WTC11 (cell line): ENCODE measurements at regions of chr2 and their contacts with region 1.

Region 1: DNA sequence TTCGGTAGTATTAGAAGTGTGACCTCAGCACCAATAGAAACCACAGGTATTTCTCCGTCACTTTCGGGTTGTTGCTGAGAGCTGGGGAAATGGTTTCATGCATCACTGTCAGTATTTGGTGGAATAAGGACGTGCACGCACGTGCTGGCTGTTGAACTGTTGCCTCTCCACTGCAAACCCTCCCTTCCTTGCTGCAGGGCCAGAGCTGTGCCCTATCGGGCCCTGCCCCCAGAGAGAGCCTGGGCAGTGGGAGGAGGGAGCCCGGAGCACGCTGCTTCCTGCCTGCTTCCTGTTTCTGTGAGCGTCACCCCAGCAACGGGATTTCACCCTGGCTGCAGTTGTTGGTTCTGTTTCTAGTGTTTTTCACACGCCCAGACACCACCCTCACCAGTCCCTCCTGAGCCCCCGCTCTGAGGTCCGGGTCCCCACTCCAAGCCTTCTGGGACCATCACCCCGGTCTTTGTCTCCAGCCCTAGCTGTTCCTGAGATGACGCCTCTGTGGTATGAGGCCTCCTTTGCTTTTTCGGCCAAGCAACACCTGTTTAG is 47.4 kb downstream of the LRRFIP1 start:
- DNase-seq: peak; percentile 70
- ATAC-seq: peak; percentile 91
- H3K4me3 Mint-ChIP-seq: no peak overlapping the region; the same call in 1 of the 2 replicates
- H3K27ac Mint-ChIP-seq: peak overlapping the region; percentile 85
- H3K4me1 Mint-ChIP-seq: peaks cover 50% of the 10 kb centered on the region
- H3K27me3 Mint-ChIP-seq: no peaks in the 10 kb centered on the region
- CTCF ChIP-seq: no peak

Region 2: GRCh38 chr2:237315170-237315828 is 359.5 kb before region 1 on chr2:
- CTCF ChIA-PET with region 1: no interaction called
- POLR2A ChIA-PET with region 1: no interaction called
- DNase-seq: no peak
- ATAC-seq: peak; percentile 51
- H3K4me3 Mint-ChIP-seq: no peak overlapping the region
- H3K27ac Mint-ChIP-seq: no peak overlapping the region
- H3K4me1 Mint-ChIP-seq: peaks cover 3% of the 10 kb centered on the region; the same call in 1 of the 2 replicates
- H3K27me3 Mint-ChIP-seq: no peaks in the 10 kb centered on the region
- CTCF ChIP-seq: no peak

Region 3: GRCh38 chr2:237662671-237663093 is 12.1 kb before region 1 on chr2:
- CTCF ChIA-PET with region 1: interaction called, 15 read pairs
- POLR2A ChIA-PET with region 1: no interaction called
- DNase-seq: peak; percentile 93
- ATAC-seq: peak; percentile 92
- H3K4me3 Mint-ChIP-seq: peak overlapping the region; percentile 23; the same call in 1 of the 2 replicates
- H3K27ac Mint-ChIP-seq: peak overlapping the region; percentile 58
- H3K4me1 Mint-ChIP-seq: peaks cover 57% of the 10 kb centered on the region
- H3K27me3 Mint-ChIP-seq: no peaks in the 10 kb centered on the region
- CTCF ChIP-seq: no peak

Region 4: DNA sequence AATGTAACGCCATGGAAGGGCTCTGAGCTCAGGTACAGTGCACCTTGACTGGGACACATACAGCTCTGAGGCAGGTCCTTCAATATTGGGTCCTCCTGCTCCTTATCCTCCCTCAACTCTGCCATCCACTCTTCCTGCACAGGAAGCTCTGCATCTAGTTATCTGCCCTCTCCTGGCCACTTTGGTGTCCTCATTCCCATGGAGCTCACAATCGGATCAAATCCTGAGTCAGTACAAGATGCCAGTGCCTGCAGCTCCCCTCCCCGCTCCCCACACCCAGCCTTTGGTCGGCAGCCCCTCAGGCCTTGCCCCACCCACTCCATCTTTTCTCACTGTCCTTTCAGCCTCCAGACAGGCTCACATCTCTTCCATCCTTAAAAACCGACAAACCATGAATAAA is 10.6 kb after region 1 on chr2:
- CTCF ChIA-PET with region 1: interaction called, 63 read pairs
- POLR2A ChIA-PET with region 1: interaction called, 3 read pairs
- DNase-seq: no peak
- ATAC-seq: peak; percentile 91
- H3K4me3 Mint-ChIP-seq: no peak overlapping the region
- H3K27ac Mint-ChIP-seq: peak overlapping the region; percentile 11; the same call in 1 of the 2 replicates
- H3K4me1 Mint-ChIP-seq: peaks cover 11% of the 10 kb centered on the region
- H3K27me3 Mint-ChIP-seq: no peaks in the 10 kb centered on the region
- CTCF ChIP-seq: no peak

Region 5: GRCh38 chr2:237691908-237692600 is 17.2 kb after region 1 on chr2:
- CTCF ChIA-PET with region 1: interaction called, 63 read pairs
- POLR2A ChIA-PET with region 1: no interaction called
- DNase-seq: peak; percentile 97
- ATAC-seq: peak; percentile 82
- H3K4me3 Mint-ChIP-seq: peak overlapping the region; percentile 75
- H3K27ac Mint-ChIP-seq: no peak overlapping the region
- H3K4me1 Mint-ChIP-seq: peaks cover 54% of the 10 kb centered on the region
- H3K27me3 Mint-ChIP-seq: no peaks in the 10 kb centered on the region
- CTCF ChIP-seq: no peak

Region 6: GRCh38 chr2:237744613-237745249 is 69.9 kb after region 1 on chr2:
- CTCF ChIA-PET with region 1: interaction called, 48 read pairs
- POLR2A ChIA-PET with region 1: no interaction called
- DNase-seq: peak; percentile 86
- ATAC-seq: peak; percentile 82
- H3K4me3 Mint-ChIP-seq: no peak overlapping the region
- H3K27ac Mint-ChIP-seq: peak overlapping the region; percentile 80
- H3K4me1 Mint-ChIP-seq: peaks cover 43% of the 10 kb centered on the region
- H3K27me3 Mint-ChIP-seq: no peaks in the 10 kb centered on the region
- CTCF ChIP-seq: peak; percentile 80

Region 7: DNA sequence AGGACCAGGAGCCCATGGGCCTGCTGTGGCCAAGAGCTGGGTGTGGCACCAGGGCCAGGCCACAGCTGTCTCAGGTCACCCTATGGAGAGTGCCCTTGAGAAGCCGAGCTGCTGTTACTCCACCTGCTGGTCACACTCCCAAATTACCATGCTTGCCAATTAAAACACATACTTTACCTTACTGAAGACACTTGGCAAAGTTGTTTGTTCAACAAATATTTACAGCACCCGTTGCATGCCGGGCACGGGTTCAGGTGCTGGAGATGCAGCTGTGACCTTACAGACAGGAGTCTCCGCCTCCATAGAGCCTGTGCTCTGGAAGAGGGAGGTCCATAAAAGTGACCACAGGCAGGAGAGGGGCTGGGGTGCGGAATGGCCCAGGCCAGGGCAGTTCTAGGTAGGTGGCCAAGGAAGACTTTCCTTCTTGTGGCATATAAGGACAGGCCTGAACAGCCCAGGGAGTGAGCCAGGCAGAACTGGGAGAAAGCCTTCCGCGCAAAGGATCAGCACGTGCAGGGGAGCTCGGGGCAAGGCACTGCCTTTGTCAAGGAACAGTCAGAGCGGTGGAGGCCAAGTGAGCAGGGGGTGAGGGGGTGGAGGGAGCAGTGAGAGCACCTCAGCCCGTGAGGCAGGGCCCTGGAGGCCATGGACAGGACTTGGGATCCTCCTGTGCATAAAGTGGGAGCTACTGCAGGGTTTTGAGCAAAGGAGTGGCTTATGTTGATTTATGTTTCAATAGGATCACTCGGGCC is 100.2 kb after region 1 on chr2:
- CTCF ChIA-PET with region 1: interaction called, 11 read pairs
- POLR2A ChIA-PET with region 1: no interaction called
- DNase-seq: peak; percentile 71
- ATAC-seq: peak; percentile 96
- H3K4me3 Mint-ChIP-seq: no peak overlapping the region
- H3K27ac Mint-ChIP-seq: peak overlapping the region; percentile 83
- H3K4me1 Mint-ChIP-seq: peaks cover 6% of the 10 kb centered on the region; the same call in 1 of the 2 replicates
- H3K27me3 Mint-ChIP-seq: no peaks in the 10 kb centered on the region
- CTCF ChIP-seq: peak; percentile 72